ENCODE measurements at regions of chr2 and their contacts with region 1.

Region 1: DNA sequence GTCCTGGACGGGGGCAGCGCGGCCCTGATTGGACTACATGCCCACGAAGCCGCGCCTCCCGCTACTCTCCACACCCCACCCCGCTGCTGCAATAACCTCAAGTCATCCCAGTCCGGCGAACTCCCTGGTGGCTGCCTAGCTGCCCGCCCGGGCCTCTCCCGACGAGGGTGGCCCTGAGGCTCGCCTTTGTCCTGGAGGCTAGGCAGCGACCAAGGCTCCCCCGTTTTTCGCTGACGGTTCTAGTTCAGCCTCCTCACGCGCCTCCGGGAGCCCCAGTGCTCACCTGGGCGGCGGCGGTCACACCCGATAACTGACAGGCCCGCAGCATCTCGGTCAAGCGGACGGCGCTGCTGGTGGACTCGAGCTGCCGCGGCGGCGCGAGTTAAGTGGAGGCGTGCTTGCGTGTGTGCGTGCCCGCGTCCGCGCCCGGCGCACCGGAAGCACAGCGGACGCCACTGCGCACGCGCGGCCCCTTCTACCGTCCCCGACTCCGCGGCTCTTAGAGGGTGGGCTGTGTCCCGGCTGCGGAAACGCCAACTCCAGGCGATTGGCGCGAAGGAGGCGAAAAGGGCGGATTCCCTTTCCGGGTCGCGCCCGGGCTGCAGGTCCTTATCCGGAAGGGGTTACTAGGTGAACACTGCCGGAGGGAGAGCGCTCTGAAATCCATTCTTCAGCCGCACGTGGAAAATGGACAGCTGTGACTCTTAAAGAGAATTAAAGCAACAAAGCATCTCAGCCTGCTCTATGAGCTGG is at the start of gene IMMT:
- DNase-seq: peak; percentile 86
- ATAC-seq: peak; percentile 91
- H3K4me3 Mint-ChIP-seq: peak within 1 kb of the TSS; percentile 91
- H3K27ac Mint-ChIP-seq: peak within 1 kb of the TSS; percentile 90
- H3K4me1 Mint-ChIP-seq: peaks cover 59% of the 10 kb centered on the region
- H3K27me3 Mint-ChIP-seq: no peaks in the 10 kb centered on the region
- CTCF ChIP-seq: no peak
- total RNA-seq, gene IMMT: 90.3 and 93.0 TPM in 2 replicates

Region 2: GRCh38 chr2:85611705-85612587 is 583.3 kb before region 1 on chr2 and contains the start of gene C2orf68:
- CTCF ChIA-PET with region 1: no interaction called
- POLR2A ChIA-PET with region 1: no interaction called
- intact Hi-C with region 1: loop called (anchors 5 kb)
- DNase-seq: peak; percentile 81
- ATAC-seq: peak; percentile 73
- H3K4me3 Mint-ChIP-seq: peak within 1 kb of the TSS; percentile 98
- H3K27ac Mint-ChIP-seq: peak within 1 kb of the TSS; percentile 91
- H3K4me1 Mint-ChIP-seq: peaks cover 39% of the 10 kb centered on the region
- H3K27me3 Mint-ChIP-seq: no peaks in the 10 kb centered on the region
- CTCF ChIP-seq: no peak
- total RNA-seq, gene C2orf68: 49.7 and 61.5 TPM in 2 replicates

Region 3: DNA sequence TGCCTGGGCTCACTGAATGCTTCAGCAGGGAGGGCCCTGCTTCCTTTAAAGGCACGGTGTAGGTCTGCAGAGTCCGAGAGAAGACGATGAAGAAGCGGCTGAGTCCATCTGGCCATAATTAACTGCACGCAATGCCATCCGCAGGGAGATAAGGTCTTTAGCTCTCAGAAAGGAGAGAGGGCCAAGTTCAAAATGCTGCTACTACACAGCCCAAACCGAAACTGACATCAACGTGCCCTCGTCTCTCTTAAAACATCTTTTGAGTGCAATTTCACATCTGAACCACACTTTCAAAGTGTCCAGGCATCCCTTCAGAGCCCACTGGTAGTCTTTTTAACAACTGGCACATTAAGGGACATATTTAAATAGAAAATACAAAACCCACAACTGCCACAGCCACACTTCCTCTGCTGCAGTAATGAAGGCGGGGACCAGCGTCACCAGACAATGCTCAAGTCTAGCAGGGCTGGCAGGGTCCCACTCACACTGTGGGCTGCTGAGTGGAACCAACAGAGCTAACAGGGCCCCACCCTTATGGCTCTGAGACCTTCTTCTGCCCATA is 342.2 kb before region 1 on chr2:
- CTCF ChIA-PET with region 1: no interaction called
- POLR2A ChIA-PET with region 1: no interaction called
- intact Hi-C with region 1: loop called (anchors 10 kb)
- DNase-seq: peak; percentile 29
- ATAC-seq: peak; percentile 76
- H3K4me3 Mint-ChIP-seq: peak overlapping the region; percentile 79
- H3K27ac Mint-ChIP-seq: peak overlapping the region; percentile 99
- H3K4me1 Mint-ChIP-seq: peaks cover 79% of the 10 kb centered on the region
- H3K27me3 Mint-ChIP-seq: no peaks in the 10 kb centered on the region
- CTCF ChIP-seq: no peak

Region 4: DNA sequence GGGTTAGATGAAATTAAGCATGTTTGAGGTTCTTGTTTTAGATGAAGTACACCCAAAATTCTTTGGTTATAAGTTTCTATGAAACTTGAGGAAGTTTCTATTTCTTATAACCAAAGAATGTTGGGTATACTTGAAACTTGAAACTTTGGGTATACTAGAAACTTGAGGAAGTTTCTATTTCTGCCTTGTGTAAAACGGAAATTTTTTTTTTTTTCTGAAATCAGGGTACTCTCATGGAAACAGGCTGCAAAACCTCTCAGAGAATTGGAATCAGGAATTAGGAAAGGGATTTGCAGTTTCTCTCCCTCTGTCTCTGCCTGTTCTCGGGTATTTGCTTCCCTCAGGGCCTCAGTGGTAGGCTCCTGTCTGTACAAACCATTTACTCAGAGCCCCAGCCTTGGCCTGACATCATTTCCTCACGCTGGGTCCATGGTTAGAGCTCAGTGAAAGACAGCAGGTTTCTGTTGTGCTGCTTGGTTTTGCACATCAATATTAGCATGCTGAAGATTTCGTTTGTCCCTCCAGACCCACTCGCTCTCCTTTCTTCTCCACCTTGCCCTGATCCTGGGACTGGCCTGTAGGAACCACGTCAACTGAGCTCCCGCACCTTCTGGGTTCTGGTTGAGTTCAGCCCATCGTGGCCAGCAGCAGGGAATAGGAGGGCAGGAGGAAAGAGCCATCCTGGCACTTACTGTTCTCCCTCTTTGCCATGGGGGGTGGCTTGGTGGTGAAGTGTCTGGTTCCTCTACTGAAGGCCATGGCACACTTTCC is 196.0 kb before region 1 on chr2:
- CTCF ChIA-PET with region 1: no interaction called
- POLR2A ChIA-PET with region 1: interaction called, 3 read pairs
- intact Hi-C with region 1: loop called (anchors 10 kb)
- DNase-seq: no peak
- ATAC-seq: peak; percentile 73
- H3K4me3 Mint-ChIP-seq: peak overlapping the region; percentile 66
- H3K27ac Mint-ChIP-seq: peak overlapping the region; percentile 96
- H3K4me1 Mint-ChIP-seq: peaks cover 76% of the 10 kb centered on the region
- H3K27me3 Mint-ChIP-seq: no peaks in the 10 kb centered on the region
- CTCF ChIP-seq: no peak

Region 5: GRCh38 chr2:86105252-86105968 is 89.8 kb before region 1 on chr2 and contains the start of gene POLR1A:
- CTCF ChIA-PET with region 1: no interaction called
- POLR2A ChIA-PET with region 1: interaction called, 13 read pairs
- intact Hi-C with region 1: loop called (anchors 1 kb)
- DNase-seq: peak; percentile 70
- ATAC-seq: peak; percentile 78
- H3K4me3 Mint-ChIP-seq: peak within 1 kb of the TSS; percentile 99
- H3K27ac Mint-ChIP-seq: peak within 1 kb of the TSS; percentile 100
- H3K4me1 Mint-ChIP-seq: peaks cover 53% of the 10 kb centered on the region
- H3K27me3 Mint-ChIP-seq: no peaks in the 10 kb centered on the region
- CTCF ChIP-seq: no peak
- total RNA-seq, gene POLR1A: 47.8 and 53.4 TPM in 2 replicates

Region 6: GRCh38 chr2:86238354-86238753 is 43.1 kb after region 1 on chr2:
- CTCF ChIA-PET with region 1: no interaction called
- POLR2A ChIA-PET with region 1: interaction called, 7 read pairs
- intact Hi-C with region 1: loop called (anchors 2 kb)
- DNase-seq: peak; percentile 55
- ATAC-seq: peak; percentile 99
- H3K4me3 Mint-ChIP-seq: peak overlapping the region; percentile 39
- H3K27ac Mint-ChIP-seq: peak overlapping the region; percentile 5
- H3K4me1 Mint-ChIP-seq: peaks cover 57% of the 10 kb centered on the region
- H3K27me3 Mint-ChIP-seq: no peaks in the 10 kb centered on the region
- CTCF ChIP-seq: no peak

Measured in activated B cell treated with CpG ODN at 0.5 μM for 24 hours (primary cell).